HepG2 (cell line): ENCODE measurements at regions of chr19 and their contacts with region 1.

Region 1: GRCh38 chr19:13195678-13196077 is 45.5 kb downstream of the IER2 start:
- DNase-seq: peak; percentile 80
- ATAC-seq: peak; percentile 78
- H3K4me3 ChIP-seq: no peak overlapping the region
- H3K27ac ChIP-seq: no peak overlapping the region
- H3K4me1 ChIP-seq: peaks cover 38% of the 10 kb centered on the region
- H3K27me3 ChIP-seq: no peaks in the 10 kb centered on the region
- CTCF ChIP-seq: peak; percentile 88
- EP300 ChIP-seq: no peak
- POLR2A ChIP-seq: no peak
- RAD21 ChIP-seq: peak; percentile 51

Region 2: GRCh38 chr19:13162518-13163314 is 33.0 kb before region 1 on chr19:
- CTCF ChIA-PET with region 1: no interaction called
- POLR2A ChIA-PET with region 1: interaction called, 10 read pairs
- in situ Hi-C with region 1: no loop called
- intact Hi-C with region 1: no loop called
- DNase-seq: peak; percentile 98
- ATAC-seq: peak; percentile 84
- H3K4me3 ChIP-seq: peak overlapping the region; percentile 63 to 81 (median 64)
- H3K27ac ChIP-seq: peak overlapping the region; percentile 99
- H3K4me1 ChIP-seq: peaks cover 52% of the 10 kb centered on the region
- H3K27me3 ChIP-seq: no peaks in the 10 kb centered on the region
- CTCF ChIP-seq: 0 out of 2 replicates have a peak, but pooled peaks have one; percentile 26
- EP300 ChIP-seq: no peak; a peak in 1 of 4 replicates
- POLR2A ChIP-seq: peak; percentile 82 to 90
- RAD21 ChIP-seq: peak; percentile 38

Region 3: DNA sequence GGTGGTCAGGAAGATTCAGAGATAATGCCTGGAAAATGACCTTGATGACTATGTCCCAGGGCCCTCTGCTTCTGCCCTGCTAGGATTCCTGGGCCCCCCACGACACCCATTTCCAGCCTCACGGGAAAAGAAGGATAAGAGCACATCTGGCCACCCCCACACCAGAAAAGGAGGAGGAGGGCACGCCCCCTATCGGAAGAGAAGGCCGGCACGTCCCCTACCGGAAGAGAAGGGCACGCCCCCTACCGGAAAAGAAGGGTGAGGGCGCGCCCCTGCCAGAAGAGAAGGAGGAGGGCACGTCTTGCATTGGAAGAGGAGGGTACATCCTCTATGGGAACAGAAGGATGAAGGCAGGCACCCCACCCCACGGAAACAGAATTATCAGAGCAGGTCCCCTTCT is 38.8 kb after region 1 on chr19:
- CTCF ChIA-PET with region 1: interaction called, 19 read pairs
- POLR2A ChIA-PET with region 1: no interaction called
- in situ Hi-C with region 1: no loop called
- intact Hi-C with region 1: loop called (anchors 1 kb)
- DNase-seq: peak; percentile 42
- ATAC-seq: peak; percentile 69
- H3K4me3 ChIP-seq: no peak overlapping the region
- H3K27ac ChIP-seq: no peak overlapping the region
- H3K4me1 ChIP-seq: no peaks in the 10 kb centered on the region
- H3K27me3 ChIP-seq: peaks cover 3 to 24% of the 10 kb centered on the region in 2 experiments; a peak in 4 of 5 replicates
- CTCF ChIP-seq: peak; percentile 88
- EP300 ChIP-seq: no peak
- POLR2A ChIP-seq: no peak
- RAD21 ChIP-seq: peak; percentile 44; the same call in 1 of the 2 replicates

Region 4: GRCh38 chr19:13262450-13262849 is 66.8 kb after region 1 on chr19:
- CTCF ChIA-PET with region 1: interaction called, 15 read pairs
- POLR2A ChIA-PET with region 1: no interaction called
- in situ Hi-C with region 1: no loop called
- intact Hi-C with region 1: loop called (anchors 1 kb)
- DNase-seq: peak; percentile 38
- ATAC-seq: no peak; the same call in 2 of the 3 replicates
- H3K4me3 ChIP-seq: no peak overlapping the region
- H3K27ac ChIP-seq: no peak overlapping the region
- H3K4me1 ChIP-seq: no peaks in the 10 kb centered on the region
- H3K27me3 ChIP-seq: peaks cover 1 to 16% of the 10 kb centered on the region in 2 experiments; a peak in 2 of 5 replicates
- CTCF ChIP-seq: peak; percentile 69
- EP300 ChIP-seq: no peak
- POLR2A ChIP-seq: no peak
- RAD21 ChIP-seq: no peak